ENCODE measurements at regions of chr12 and their contacts with region 1.

Region 1: GRCh38 chr12:93427779-93428563 is 13.8 kb downstream of the UBE2N start:
- DNase-seq: peak in 1 of 4 experiments; percentile 64
- ATAC-seq: peak; percentile 72
- H3K4me3 ChIP-seq: no peak overlapping the region
- H3K27ac ChIP-seq: peak overlapping the region; percentile 44; the same call in 1 of the 3 replicates
- H3K4me1 ChIP-seq: peaks cover 5 to 8% of the 10 kb centered on the region in 2 experiments; a peak in 3 of 5 replicates
- H3K27me3 ChIP-seq: no peaks in the 10 kb centered on the region
- CTCF ChIP-seq: no peak
- EP300 ChIP-seq: no peak
- POLR2A ChIP-seq: no peak
- RAD21 ChIP-seq: no peak

Region 2: GRCh38 chr12:93127582-93128331 is 300.2 kb before region 1 on chr12:
- CTCF ChIA-PET with region 1: no interaction called
- POLR2A ChIA-PET with region 1: no interaction called
- in situ Hi-C with region 1: no loop called
- intact Hi-C with region 1: no loop called
- DNase-seq: peak; percentile 27 to 50 (median 40)
- ATAC-seq: peak; percentile 91
- H3K4me3 ChIP-seq: no peak overlapping the region
- H3K27ac ChIP-seq: no peak overlapping the region
- H3K4me1 ChIP-seq: no peaks in the 10 kb centered on the region; a peak in 1 of 5 replicates
- H3K27me3 ChIP-seq: no peaks in the 10 kb centered on the region
- CTCF ChIP-seq: peak; percentile 43 to 53 (median 43); a peak in 5 of 6 replicates
- EP300 ChIP-seq: no peak
- POLR2A ChIP-seq: no peak
- RAD21 ChIP-seq: peak in 1 of 2 experiments; percentile 44; a peak in 2 of 4 replicates

Region 3: DNA sequence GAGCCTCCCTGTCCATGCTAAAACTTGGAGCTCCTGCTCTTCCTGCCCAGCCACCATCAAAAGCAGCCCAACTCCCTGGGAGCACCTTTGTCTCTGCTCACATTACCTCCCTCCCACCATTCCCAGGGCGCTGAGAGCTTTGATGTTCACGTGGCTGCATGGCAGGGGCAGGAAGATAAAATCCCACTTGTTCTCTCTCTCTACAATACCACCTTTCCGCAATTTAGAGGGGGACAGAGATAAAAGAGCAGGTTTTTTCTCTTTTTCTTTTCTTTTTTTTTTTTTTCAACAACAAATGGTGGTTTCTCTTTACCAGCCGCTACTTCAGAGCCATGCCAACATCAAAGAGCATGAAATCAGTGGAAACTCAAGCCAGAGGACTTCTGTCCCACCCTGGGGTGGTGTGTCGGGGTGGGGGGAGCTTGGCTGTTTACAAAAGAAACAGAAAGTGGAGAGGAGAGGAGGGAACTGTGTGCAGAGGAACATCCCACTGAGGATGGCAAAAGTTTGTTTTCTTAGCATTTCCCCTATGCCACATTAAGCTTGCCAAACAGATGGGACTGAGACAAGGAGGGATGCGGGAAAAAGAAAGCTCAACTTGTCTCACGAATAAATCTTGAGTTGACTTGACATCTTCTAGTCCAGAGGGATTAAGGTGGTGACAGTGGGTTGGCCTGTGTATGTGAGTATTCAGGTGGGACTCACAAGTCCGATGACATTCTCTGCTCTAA is 154.0 kb before region 1 on chr12:
- CTCF ChIA-PET with region 1: no interaction called
- POLR2A ChIA-PET with region 1: no interaction called
- in situ Hi-C with region 1: no loop called
- intact Hi-C with region 1: no loop called
- DNase-seq: no peak
- ATAC-seq: peak; percentile 43
- H3K4me3 ChIP-seq: no peak overlapping the region
- H3K27ac ChIP-seq: no peak overlapping the region
- H3K4me1 ChIP-seq: peaks cover 0 to 7% of the 10 kb centered on the region in 2 experiments; a peak in 3 of 5 replicates
- H3K27me3 ChIP-seq: no peaks in the 10 kb centered on the region
- CTCF ChIP-seq: no peak
- EP300 ChIP-seq: no peak
- POLR2A ChIP-seq: no peak
- RAD21 ChIP-seq: no peak

Region 4: GRCh38 chr12:93438266-93439050 is 10.5 kb after region 1 on chr12:
- CTCF ChIA-PET with region 1: no interaction called
- POLR2A ChIA-PET with region 1: interaction called, 16 read pairs
- in situ Hi-C with region 1: no loop called
- intact Hi-C with region 1: no loop called
- DNase-seq: no peak
- ATAC-seq: no peak
- H3K4me3 ChIP-seq: no peak overlapping the region
- H3K27ac ChIP-seq: no peak overlapping the region
- H3K4me1 ChIP-seq: peaks cover 20 to 36% of the 10 kb centered on the region in 2 experiments
- H3K27me3 ChIP-seq: no peaks in the 10 kb centered on the region
- CTCF ChIP-seq: no peak
- EP300 ChIP-seq: no peak
- POLR2A ChIP-seq: no peak
- RAD21 ChIP-seq: no peak

Region 5: DNA sequence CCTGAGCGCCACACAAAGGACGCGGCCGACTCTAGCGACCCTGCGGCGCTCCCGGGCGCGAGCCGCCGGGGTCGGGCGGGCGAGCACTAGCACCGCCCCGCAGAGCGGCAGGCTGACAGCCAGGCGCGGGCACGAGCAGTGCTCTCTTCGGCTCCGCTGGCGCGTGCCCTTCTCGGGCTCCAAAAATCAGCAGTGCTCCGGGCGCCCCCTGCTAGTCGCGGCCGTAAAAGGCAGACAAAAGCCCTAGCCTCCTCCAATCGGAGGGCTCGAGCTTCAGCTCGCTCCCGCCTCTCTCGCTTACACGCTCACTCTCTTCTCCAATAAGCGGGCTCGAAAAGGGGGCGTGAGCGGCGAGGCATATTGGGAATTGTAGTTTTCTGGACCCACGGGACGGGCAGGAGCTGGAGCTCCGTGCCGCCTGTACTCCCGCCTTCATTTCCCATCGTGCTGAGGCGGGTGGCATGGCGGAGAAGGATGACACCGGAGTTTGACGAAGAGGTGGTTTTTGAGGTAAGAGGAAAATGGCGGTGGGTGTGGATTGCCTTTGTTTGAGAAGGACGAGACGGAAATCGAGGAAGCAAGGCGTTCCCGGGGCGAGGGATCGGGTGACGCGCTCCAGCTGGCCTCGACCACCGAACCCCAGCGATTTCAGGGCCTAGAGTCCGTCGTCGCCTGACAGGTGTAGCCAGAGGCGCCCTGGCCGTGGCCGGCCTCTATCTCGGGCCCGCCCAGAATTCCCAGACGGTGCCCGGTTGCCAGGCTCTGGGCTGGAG is 1789.6 kb after region 1 on chr12 and contains the starts of genes FGD6 and VEZT:
- CTCF ChIA-PET with region 1: no interaction called
- POLR2A ChIA-PET with region 1: no interaction called
- in situ Hi-C with region 1: no loop called
- intact Hi-C with region 1: no loop called
- DNase-seq: peak; percentile 96 to 98 (median 97)
- ATAC-seq: peak; percentile 93
- H3K4me3 ChIP-seq: peak within 1 kb of the TSS; percentile 70
- H3K27ac ChIP-seq: peak within 1 kb of the TSS; percentile 81
- H3K4me1 ChIP-seq: peaks cover 8 to 14% of the 10 kb centered on the region in 2 experiments
- H3K27me3 ChIP-seq: no peaks in the 10 kb centered on the region
- CTCF ChIP-seq: peak; percentile 78 to 94 (median 82)
- EP300 ChIP-seq: no peak
- POLR2A ChIP-seq: peak; percentile 85
- RAD21 ChIP-seq: peak; percentile 90 to 99
- polyA plus RNA-seq, gene FGD6: 1.5 to 2.1 TPM
- polyA plus RNA-seq, gene VEZT: 16.1 to 29.1 TPM

Measured in K562 (cell line).